Activated T-helper 1 cell treated with anti-CD3 and anti-CD28 coated beads, Interleukin-12 subunit alpha, Interleukin-12 subunit beta, Interleukin-2, Interleukin-4 antibody, amounts not matched to agents 30 ng/mL and 10 ng/mL and 1 ng/mL, durations not matched to agents 14 hours and 24 hours and 36 hours (primary cell): ENCODE measurements at regions of chr13 and their contacts with region 1.

Region 1: DNA sequence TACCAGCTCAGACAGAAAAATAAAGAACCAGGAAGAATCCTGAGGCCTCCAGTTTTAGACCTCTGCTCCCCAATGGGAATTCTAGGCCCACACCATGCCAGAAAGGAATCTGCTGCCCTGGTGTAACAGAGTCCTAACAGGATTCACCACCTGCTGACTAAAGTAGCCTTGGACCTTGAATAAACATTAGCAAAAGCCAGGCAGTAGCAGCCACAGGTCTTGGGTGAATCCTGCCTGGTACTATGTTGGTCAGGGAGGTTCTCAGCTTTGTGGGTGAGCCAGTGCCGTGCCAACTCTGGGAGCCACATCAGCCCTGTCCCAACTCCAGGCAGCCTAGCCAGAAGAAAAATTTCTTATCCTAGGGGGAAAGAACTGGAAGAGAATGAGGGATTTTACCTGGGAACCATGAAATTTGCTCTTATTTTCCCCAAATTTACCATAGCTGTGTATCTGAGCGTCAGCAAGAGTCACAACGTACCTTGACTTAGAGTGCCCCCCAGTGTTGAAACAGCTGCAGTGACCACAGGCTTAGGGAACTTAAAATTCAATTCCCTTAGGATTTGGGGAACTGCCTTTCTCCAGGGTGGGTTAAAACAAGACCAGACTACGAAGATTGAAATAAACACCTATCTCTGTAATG is 1895.6 kb upstream of the PRR20A start:
- DNase-seq: no peak
- H3K4me3 Mint-ChIP-seq: no peak overlapping the region
- H3K27ac Mint-ChIP-seq: no peak overlapping the region
- H3K4me1 Mint-ChIP-seq: no peaks in the 10 kb centered on the region
- H3K27me3 Mint-ChIP-seq: no peaks in the 10 kb centered on the region

Region 2: DNA sequence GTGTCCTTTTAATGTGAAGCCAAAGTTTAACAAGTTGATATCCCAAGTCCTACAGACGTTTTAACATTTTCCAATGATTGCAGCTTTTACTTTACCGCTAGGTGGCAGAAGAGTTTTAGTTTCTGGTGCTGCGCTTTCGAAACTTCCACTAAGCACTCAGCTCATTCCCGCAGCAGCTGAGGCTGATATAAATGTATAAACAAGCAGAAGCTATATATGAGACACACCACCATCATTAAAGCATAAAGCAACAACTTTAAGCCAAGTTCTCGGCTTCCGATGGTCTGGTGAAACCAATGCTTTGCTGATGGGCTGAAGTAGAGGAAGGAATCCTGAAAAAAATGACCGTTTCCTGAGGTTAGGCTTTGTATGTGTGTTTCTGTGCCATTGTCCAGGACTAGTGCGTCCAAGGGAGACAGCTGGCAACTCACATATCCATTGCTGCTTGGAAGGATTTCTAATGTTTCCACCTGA is 1462.6 kb before region 1 on chr13:
- intact Hi-C with region 1: loop called (anchors 10 kb)
- DNase-seq: peak; percentile 0
- H3K4me3 Mint-ChIP-seq: no peak overlapping the region
- H3K27ac Mint-ChIP-seq: no peak overlapping the region
- H3K4me1 Mint-ChIP-seq: no peaks in the 10 kb centered on the region
- H3K27me3 Mint-ChIP-seq: no peaks in the 10 kb centered on the region

Region 3: GRCh38 chr13:55263045-55263444 is 17.9 kb after region 1 on chr13:
- intact Hi-C with region 1: loop called (anchors 1 kb)
- DNase-seq: no peak
- H3K4me3 Mint-ChIP-seq: no peak overlapping the region
- H3K27ac Mint-ChIP-seq: no peak overlapping the region
- H3K4me1 Mint-ChIP-seq: no peaks in the 10 kb centered on the region
- H3K27me3 Mint-ChIP-seq: no peaks in the 10 kb centered on the region